AG04449 (cell line): ENCODE measurements at regions of chr14 and their contacts with region 1.

Region 1: DNA sequence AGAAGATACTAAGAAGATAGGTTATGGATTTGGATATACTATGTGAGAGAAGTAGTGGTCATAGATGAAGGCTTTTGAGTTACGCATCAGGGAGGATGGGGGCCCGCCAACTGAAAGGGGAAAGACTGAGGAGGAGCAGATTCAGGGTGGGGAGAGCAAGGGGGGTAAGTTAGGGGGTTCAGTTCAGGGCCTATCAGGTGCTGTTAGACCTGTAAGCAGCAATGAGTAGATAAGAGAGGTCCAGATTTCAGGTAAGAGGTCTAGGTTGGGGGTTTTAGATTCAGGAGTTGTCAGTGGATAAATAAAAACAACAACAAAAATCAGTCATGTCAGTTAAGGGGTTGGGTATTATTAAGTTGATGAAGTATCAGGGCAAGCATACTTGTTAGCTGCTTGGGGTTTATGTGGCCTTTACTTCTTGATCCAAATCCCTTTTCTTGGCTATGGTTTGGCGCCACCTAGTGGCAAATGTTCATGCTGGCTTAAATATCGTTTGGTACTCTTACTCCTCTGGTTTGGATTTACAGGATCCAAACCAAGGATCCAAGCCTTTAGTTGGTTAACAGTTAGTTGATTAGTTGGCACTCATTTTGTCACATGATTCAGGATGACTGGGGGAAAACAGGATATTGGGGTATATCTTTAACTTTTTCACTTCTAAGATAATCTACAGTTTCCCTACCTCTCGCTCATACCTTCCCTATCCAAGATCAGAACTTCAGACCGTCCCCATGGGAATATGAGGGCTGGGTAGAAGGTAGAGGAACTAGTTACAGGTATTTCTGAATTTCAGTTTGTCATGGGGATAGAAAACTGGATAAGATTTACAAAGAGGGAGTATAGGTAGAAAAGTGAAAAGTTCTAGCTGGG is 65.1 kb downstream of the PCNX1 start:
- DNase-seq: peak; percentile 62
- H3K4me3 ChIP-seq: no peak overlapping the region
- CTCF ChIP-seq: peak; percentile 71

Region 2: GRCh38 chr14:70827396-70828151 is 144.8 kb before region 1 on chr14:
- CTCF ChIA-PET with region 1: interaction called, 112 read pairs
- POLR2A ChIA-PET with region 1: no interaction called
- DNase-seq: no peak
- H3K4me3 ChIP-seq: no peak overlapping the region
- CTCF ChIP-seq: no peak

Region 3: DNA sequence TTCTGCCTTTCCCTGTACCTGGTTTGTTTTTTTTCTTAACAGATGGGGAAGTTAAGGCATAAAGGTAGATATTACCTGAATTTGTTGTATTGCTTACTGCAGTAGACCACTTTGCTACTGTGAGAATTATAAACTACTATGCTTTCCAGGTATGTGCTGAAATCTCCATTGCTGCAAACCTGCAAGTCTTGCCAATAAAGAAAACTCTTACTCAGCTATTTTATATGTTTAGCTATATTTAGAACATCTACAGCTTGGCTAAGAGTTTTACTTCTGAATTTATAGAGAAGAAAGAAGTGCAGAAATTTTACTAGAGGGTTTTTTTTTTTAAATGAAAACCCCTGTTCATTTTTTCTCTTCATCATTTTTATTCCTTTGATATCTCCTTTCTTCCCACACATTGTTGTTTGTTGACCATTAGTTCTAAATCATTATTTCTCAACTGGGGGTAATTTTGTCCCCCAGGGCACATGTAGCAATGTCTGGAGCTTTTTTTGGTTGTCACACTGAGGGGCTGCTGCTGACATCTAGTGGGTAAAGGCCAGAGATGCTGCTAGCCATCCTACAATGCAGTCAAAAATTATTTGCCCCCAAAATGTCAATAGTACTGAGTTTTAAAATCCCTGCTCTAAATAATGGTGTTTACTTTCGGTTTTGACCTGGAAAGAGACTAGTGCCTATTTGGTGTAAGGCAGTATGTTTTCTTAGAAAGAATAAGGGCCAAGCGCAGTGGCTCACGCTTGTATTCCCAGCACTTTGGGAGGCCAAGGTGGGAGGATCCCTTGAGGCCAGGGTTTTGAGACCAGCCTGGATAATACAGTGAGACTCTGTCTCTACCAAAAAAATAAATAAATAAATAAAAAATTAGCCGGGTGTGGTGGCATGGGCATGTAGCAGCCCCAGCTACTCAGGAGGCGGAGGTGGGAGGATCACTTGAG is 16.5 kb before region 1 on chr14:
- CTCF ChIA-PET with region 1: interaction called, 17 read pairs
- POLR2A ChIA-PET with region 1: no interaction called
- DNase-seq: no peak
- H3K4me3 ChIP-seq: no peak overlapping the region
- CTCF ChIP-seq: peak; percentile 62

Region 4: GRCh38 chr14:70988452-70988851 is 16.1 kb after region 1 on chr14:
- CTCF ChIA-PET with region 1: interaction called, 26 read pairs
- POLR2A ChIA-PET with region 1: no interaction called
- DNase-seq: no peak
- H3K4me3 ChIP-seq: no peak overlapping the region
- CTCF ChIP-seq: no peak

Region 5: GRCh38 chr14:70999117-70999516 is 26.8 kb after region 1 on chr14:
- CTCF ChIA-PET with region 1: interaction called, 20 read pairs
- POLR2A ChIA-PET with region 1: no interaction called
- DNase-seq: no peak
- H3K4me3 ChIP-seq: no peak overlapping the region
- CTCF ChIP-seq: no peak